ENCODE measurements at regions of chr1 and their contacts with region 1.

Region 1: GRCh38 chr1:72241397-72241796 is 40.9 kb downstream of the NEGR1 start:
- DNase-seq: peak; percentile 54
- ATAC-seq: peak; percentile 76
- H3K4me3 ChIP-seq: no peak overlapping the region
- H3K27ac ChIP-seq: no peak overlapping the region
- H3K4me1 ChIP-seq: peaks cover 15% of the 10 kb centered on the region; the same call in 1 of the 2 replicates
- H3K27me3 ChIP-seq: no peaks in the 10 kb centered on the region
- CTCF ChIP-seq: no peak
- EP300 ChIP-seq: peak in 1 of 2 experiments; percentile 21; a peak in 1 of 4 replicates
- POLR2A ChIP-seq: no peak
- RAD21 ChIP-seq: no peak

Region 2: DNA sequence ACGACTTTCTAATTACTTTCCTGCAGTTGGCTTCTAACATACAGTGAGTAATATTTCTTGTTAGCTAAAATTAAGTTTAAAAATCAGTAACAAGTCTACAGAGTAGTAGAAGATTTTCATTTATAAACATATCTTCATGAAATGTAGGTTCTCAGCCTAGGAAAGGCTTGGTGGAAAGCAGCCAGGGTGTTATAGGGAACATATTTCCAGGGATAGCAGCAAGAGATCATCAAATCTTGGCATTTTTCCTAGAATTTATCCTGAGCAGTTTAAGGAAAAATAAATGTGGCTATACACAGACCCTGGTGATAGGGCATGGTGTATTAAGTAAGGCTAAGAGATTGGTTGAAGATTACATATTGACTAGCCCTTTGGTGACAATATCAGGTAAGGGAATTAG is 244.4 kb after region 1 on chr1:
- CTCF ChIA-PET with region 1: no interaction called
- POLR2A ChIA-PET with region 1: no interaction called
- in situ Hi-C with region 1: no loop called
- intact Hi-C with region 1: loop called (anchors 5 kb)
- DNase-seq: no peak
- ATAC-seq: no peak
- H3K4me3 ChIP-seq: no peak overlapping the region
- H3K27ac ChIP-seq: no peak overlapping the region
- H3K4me1 ChIP-seq: peaks cover 63% of the 10 kb centered on the region
- H3K27me3 ChIP-seq: no peaks in the 10 kb centered on the region
- CTCF ChIP-seq: no peak
- EP300 ChIP-seq: no peak
- POLR2A ChIP-seq: no peak
- RAD21 ChIP-seq: no peak